ENCODE measurements at regions of chr13 and their contacts with region 1.

Region 1: DNA sequence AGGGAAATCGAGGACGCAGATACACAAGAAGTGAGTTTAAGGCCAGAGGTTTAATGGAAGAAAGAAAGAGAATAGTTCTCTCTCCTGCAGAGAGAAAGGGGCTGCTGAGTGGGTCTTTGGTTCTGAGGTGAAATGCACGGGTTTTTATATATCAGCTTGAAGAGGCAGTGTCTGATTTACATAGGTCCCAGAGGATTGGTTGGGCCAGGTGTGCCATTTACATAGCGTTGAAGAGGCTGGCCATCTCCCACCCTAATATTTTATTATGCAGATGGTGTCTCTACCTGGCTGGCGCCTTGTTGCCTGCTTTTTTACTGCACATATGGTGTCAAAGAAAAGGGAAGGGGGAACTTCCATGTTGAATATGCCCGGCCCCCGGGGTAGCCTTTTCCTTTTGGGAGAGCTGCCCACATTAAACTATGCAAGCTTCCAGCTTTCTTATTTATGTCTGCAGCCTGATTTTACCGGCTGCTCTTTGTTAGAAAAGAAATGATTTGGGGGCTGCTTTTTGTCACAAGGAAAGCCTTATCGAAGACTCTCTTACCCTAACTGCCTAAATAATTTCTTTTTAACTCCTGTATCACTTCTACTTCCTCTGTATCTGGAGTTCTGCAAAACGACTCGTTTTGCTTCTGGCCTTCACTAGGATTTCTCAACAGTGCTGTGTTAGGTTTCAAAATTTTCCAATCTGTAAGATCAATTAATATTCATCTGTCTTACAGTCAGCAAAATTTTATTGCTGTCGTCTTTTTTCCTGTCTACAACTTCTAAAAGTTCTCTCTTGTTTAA is 268.5 kb downstream of the B3GLCT start:
- DNase-seq: no peak
- H3K4me3 ChIP-seq: no peak overlapping the region
- H3K27me3 ChIP-seq: peaks cover 5% of the 10 kb centered on the region
- CTCF ChIP-seq: no peak

Region 2: DNA sequence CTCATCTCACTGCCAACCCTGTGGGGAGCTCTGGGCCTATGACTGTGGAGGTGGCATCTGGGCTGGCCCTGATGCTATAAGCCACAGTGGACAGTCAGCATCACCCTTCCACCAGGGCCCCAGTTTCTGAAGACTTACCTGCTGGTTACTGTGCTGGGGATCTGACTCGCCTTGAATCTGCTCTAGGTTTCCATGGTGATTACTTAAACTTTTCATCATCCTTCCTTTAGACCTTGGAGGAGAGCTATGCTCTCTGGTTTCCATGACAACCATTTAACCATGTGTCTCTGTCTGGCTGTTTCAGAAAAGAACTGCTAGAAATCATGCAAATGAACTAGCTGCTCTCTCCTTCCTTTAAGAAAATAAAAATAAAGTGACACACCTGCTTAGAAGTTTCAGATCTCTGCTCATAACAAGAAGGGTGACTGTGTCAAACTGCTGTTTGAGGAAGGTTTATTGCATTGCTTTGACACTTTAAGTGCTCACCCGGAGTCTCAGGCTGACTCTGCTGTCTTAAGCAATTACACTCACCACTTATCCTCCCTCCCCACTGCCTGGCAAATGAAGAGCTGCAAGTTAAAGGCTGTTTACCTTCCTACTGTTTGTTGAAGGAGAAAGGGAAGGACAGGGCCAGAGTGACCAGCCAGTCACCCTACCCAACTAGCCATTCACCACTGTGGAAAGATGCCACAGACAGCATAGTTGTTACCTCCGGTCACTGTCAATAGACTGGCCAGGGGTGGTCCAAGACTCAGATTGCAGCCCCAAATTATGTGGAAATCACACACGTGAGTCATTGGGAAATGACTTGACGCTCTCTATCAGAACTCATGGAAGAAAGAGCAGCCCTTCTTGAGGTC is 394.2 kb before region 1 on chr13:
- CTCF ChIA-PET with region 1: no interaction called
- POLR2A ChIA-PET with region 1: no interaction called
- DNase-seq: no peak
- H3K4me3 ChIP-seq: no peak overlapping the region
- H3K27me3 ChIP-seq: peaks cover 4% of the 10 kb centered on the region
- CTCF ChIP-seq: no peak

Region 3: DNA sequence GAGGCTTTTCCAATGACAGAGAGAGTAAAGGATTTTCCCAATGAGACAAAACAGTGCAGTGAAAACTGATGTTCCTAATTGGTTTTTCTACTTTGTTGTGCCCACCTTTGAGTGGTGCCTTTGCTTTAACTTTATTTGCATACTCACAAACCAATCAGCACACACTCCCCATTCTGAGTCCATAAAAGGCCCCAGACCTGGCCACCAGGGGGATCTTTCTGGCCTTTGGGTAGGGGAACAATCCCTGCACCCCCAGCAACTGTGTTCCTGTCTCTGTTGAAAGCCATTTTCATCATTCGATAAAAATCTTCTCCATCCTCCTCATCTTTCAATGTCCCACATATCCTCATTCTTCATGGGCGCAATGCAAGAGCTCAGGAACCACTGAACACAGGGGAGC is 15.8 kb before region 1 on chr13:
- CTCF ChIA-PET with region 1: no interaction called
- POLR2A ChIA-PET with region 1: no interaction called
- DNase-seq: no peak
- H3K4me3 ChIP-seq: no peak overlapping the region
- H3K27me3 ChIP-seq: no peaks in the 10 kb centered on the region; the same call in none of the 2 replicates
- CTCF ChIP-seq: no peak

Region 4: DNA sequence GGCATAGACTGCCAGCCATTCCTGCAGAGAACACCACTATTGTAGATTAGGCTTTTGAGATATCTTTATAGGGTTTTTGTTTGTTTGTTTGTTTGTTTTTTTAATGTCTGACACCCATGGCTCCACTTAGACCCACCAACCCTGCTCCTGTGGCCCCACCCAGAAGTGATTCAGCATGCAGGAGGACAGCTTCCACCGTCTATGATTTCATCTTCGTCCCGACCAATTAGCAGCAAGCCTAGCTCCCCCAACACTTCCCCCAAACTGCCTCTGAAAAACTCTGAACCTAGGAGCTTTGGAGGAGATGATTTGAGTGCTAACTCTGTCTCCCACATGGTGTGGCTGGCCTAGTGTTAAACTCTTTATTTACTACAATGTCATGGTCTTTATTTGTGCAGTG is 162.8 kb after region 1 on chr13:
- CTCF ChIA-PET with region 1: no interaction called
- POLR2A ChIA-PET with region 1: interaction called, 11 read pairs
- DNase-seq: no peak
- H3K4me3 ChIP-seq: no peak overlapping the region
- H3K27me3 ChIP-seq: no peaks in the 10 kb centered on the region
- CTCF ChIP-seq: no peak

Region 5: DNA sequence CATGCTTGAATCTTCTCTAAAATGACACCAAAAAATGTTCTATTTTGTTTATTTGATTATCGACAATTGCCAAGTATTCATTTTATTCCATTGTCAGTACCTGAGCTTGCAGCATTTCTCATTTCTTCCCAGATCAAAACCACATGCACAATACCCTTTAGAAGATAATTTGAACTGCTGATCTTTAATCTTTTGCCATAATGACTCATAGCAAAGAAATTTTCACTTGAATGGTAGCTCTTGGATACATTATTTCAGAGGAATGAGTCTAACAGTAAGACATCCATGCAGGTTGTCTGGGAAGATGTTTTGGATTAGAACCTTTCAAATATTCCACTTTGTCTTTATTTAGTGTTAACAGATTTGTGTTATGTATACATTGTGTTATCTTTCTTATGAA is 229.0 kb after region 1 on chr13:
- CTCF ChIA-PET with region 1: no interaction called
- POLR2A ChIA-PET with region 1: no interaction called
- DNase-seq: no peak
- H3K4me3 ChIP-seq: no peak overlapping the region
- H3K27me3 ChIP-seq: no peaks in the 10 kb centered on the region; the same call in 1 of the 2 replicates
- CTCF ChIP-seq: no peak

Measured in BJ (cell line).